ENCODE measurements at regions of chr5 and their contacts with region 1.

Region 1: GRCh38 chr5:140145818-140146522 is 20.2 kb downstream of the IGIP start:
- DNase-seq: peak; percentile 84

Region 2: GRCh38 chr5:140107312-140108083 is 38.5 kb before region 1 on chr5:
- intact Hi-C with region 1: loop called (anchors 5 kb)
- DNase-seq: peak; percentile 96

Region 3: DNA sequence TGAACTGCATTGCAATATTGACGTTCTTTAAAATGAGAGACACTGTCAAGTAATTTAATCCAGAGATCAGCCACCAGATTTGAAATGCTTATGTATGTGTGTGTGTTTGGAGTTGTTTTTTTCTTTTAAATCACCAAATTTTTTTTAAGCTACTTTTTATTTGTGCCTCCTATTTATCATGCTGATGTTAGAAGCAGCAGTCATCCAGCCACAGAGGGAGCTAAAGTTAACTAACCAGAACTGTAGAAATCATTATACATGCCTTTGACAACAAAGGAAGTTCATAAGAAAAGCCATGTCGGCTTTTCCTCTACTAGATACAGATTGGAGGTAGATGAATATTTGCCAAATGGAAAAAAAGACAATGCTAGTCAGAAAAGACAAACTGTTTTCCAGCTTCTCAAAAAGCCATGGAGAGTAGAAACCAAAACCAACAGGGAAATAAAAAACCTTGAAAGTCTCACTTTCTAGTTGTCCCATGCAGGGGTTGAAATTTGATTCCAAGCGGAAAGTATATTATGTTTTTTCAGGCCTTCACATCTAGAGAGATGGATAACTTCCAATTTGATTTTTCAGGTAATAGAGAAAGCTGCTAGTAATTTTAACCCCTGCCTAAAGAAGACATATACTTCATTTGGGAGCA is 27.6 kb before region 1 on chr5:
- intact Hi-C with region 1: no loop called
- DNase-seq: no peak